CD8-positive, alpha-beta T cell (primary cell): ENCODE measurements at regions of chr10 and their contacts with region 1.

Region 1: GRCh38 chr10:89301721-89302445 is at the start of gene IFIT2:
- DNase-seq: peak in 6 of 9 experiments; percentile 11 to 83 (median 46)
- ATAC-seq: peak; percentile 76
- H3K4me3 ChIP-seq: peak within 1 kb of the TSS; percentile 51 to 76
- H3K4me3 Mint-ChIP-seq: peak within 1 kb of the TSS; percentile 88
- H3K27ac ChIP-seq: peak within 1 kb of the TSS; percentile 66 to 96
- H3K27ac Mint-ChIP-seq: peak within 1 kb of the TSS; percentile 98
- H3K4me1 ChIP-seq: peaks cover 24% of the 10 kb centered on the region
- H3K4me1 Mint-ChIP-seq: peaks cover 34% of the 10 kb centered on the region
- H3K27me3 ChIP-seq: no peaks in the 10 kb centered on the region
- H3K27me3 Mint-ChIP-seq: no peaks in the 10 kb centered on the region
- CTCF ChIP-seq: no peak
- total RNA-seq, gene IFIT2: 18.4 TPM

Region 2: GRCh38 chr10:89206402-89207180 is 95.3 kb before region 1 on chr10:
- CTCF ChIA-PET with region 1: no interaction called
- POLR2A ChIA-PET with region 1: no interaction called
- intact Hi-C with region 1: no loop called
- DNase-seq: peak in 8 of 9 experiments; percentile 8 to 76 (median 54)
- ATAC-seq: peak; percentile 79
- H3K4me3 ChIP-seq: peak overlapping the region; percentile 51 to 67
- H3K4me3 Mint-ChIP-seq: peak overlapping the region; percentile 81
- H3K27ac ChIP-seq: no peak overlapping the region
- H3K27ac Mint-ChIP-seq: peak overlapping the region; percentile 62
- H3K4me1 ChIP-seq: peaks cover 19% of the 10 kb centered on the region
- H3K4me1 Mint-ChIP-seq: peaks cover 16% of the 10 kb centered on the region
- H3K27me3 ChIP-seq: peaks cover 12 to 28% of the 10 kb centered on the region in 2 experiments
- H3K27me3 Mint-ChIP-seq: peaks cover 47% of the 10 kb centered on the region
- CTCF ChIP-seq: no peak

Region 3: GRCh38 chr10:89251409-89252224 is 50.3 kb before region 1 on chr10 and contains the start of gene LIPA:
- CTCF ChIA-PET with region 1: no interaction called
- POLR2A ChIA-PET with region 1: interaction called, 22 read pairs
- intact Hi-C with region 1: loop called in 1 of 2 experiments (anchors 1 kb)
- DNase-seq: peak; percentile 93 to 99 (median 96)
- ATAC-seq: peak; percentile 96
- H3K4me3 ChIP-seq: peak within 1 kb of the TSS; percentile 82 to 84
- H3K4me3 Mint-ChIP-seq: peak within 1 kb of the TSS; percentile 90
- H3K27ac ChIP-seq: peak within 1 kb of the TSS; percentile 63 to 65
- H3K27ac Mint-ChIP-seq: peak within 1 kb of the TSS; percentile 88
- H3K4me1 ChIP-seq: peaks cover 12% of the 10 kb centered on the region
- H3K4me1 Mint-ChIP-seq: peaks cover 23% of the 10 kb centered on the region
- H3K27me3 ChIP-seq: no peaks in the 10 kb centered on the region
- H3K27me3 Mint-ChIP-seq: peaks cover 2% of the 10 kb centered on the region
- CTCF ChIP-seq: no peak
- total RNA-seq, gene LIPA: 9.7 to 12.1 TPM

Region 4: DNA sequence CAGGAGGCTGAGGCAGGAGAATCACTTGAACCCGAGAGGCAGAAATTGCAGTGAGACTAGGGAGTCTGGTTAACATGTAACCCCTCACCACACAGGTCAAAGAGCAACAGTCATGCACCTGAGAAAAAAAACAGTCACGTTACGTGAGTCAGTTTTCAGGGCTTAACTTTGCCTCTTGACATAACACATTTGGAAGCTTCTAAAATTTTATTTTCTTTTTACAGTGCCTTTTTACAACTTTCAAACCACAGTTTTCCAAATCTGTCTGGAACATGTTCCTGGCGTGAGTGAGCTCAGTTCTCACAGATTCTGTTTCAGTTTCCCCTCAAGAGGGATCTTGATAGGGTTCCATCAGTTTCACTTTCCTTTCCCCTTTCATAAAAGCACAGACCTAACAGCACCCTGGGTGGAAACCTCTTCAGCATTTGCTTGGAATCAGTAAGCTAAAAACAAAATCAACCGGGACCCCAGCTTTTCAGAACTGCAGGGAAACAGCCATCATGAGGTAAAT is 30.3 kb after region 1 on chr10:
- CTCF ChIA-PET with region 1: interaction called, 3 read pairs
- POLR2A ChIA-PET with region 1: interaction called, 3 read pairs
- intact Hi-C with region 1: loop called in 1 of 2 experiments (anchors 1 kb)
- DNase-seq: peak in 3 of 9 experiments; percentile 36 to 85 (median 73)
- ATAC-seq: peak; percentile 44
- H3K4me3 ChIP-seq: peak overlapping the region; percentile 22 to 42
- H3K4me3 Mint-ChIP-seq: peak overlapping the region; percentile 80
- H3K27ac ChIP-seq: peak overlapping the region; percentile 28 to 70
- H3K27ac Mint-ChIP-seq: peak overlapping the region; percentile 95
- H3K4me1 ChIP-seq: peaks cover 45% of the 10 kb centered on the region
- H3K4me1 Mint-ChIP-seq: peaks cover 60% of the 10 kb centered on the region
- H3K27me3 ChIP-seq: peaks cover 0 to 7% of the 10 kb centered on the region in 2 experiments
- H3K27me3 Mint-ChIP-seq: peaks cover 12% of the 10 kb centered on the region
- CTCF ChIP-seq: no peak

Region 5: GRCh38 chr10:89391917-89392756 is 90.3 kb after region 1 on chr10 and contains the start of gene IFIT1:
- CTCF ChIA-PET with region 1: interaction called, 6 read pairs
- POLR2A ChIA-PET with region 1: interaction called, 4 read pairs
- intact Hi-C with region 1: loop called in 1 of 2 experiments (anchors 2 kb)
- DNase-seq: peak in 8 of 9 experiments; percentile 23 to 92 (median 54)
- ATAC-seq: peak; percentile 93
- H3K4me3 ChIP-seq: peak within 1 kb of the TSS; percentile 68 to 79
- H3K4me3 Mint-ChIP-seq: peak within 1 kb of the TSS; percentile 90
- H3K27ac ChIP-seq: peak within 1 kb of the TSS; percentile 65 to 80
- H3K27ac Mint-ChIP-seq: peak within 1 kb of the TSS; percentile 88
- H3K4me1 ChIP-seq: peaks cover 15% of the 10 kb centered on the region
- H3K4me1 Mint-ChIP-seq: peaks cover 35% of the 10 kb centered on the region
- H3K27me3 ChIP-seq: no peaks in the 10 kb centered on the region
- H3K27me3 Mint-ChIP-seq: no peaks in the 10 kb centered on the region
- CTCF ChIP-seq: no peak
- total RNA-seq, gene IFIT1: 1.9 to 2.5 TPM